ENCODE measurements at regions of chr11 and their contacts with region 1.

Region 1: DNA sequence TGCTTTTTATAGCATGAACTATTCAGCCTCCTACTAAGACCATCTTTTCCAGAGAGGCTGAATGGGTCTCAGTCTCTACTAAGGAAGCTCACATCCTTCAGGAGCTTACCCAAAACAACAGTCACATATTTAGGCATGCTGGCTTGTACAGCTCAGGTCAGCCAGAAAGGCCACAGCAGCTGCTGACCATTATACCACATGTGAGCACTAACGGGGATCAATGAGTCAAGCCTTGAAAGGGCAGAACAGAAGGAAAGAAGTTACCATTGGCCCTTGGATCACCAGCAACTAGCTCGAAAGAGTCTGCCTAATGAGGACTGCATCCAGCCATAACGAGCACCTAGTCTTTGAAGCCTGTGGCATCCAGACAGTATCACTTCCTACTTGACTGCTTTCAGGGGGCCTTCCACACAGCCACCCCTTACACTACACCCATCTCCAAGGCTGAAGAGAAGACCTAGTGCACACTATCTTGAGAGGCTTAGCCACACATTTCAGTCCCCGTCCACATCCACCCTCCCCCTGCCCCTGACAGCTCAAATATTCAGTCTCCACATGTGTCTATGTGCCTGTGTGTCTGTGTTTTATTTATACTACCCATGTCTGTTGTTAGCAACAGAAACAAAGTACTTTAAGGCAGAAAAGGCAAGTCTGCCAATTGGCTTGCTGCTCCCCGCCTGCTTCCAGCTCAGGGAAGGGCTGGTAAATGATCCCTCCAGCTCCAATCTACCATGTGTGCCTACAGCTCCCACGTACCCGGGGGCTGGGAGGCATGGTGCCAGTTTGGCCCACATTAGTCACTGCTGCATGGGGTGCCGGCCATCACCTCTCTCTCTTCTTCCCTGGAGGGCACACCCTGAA is 95.5 kb downstream of the RPL27A start:
- DNase-seq: peak; percentile 62 to 84 (median 78)
- H3K4me3 ChIP-seq: no peak overlapping the region
- H3K27ac ChIP-seq: peak overlapping the region in 1 of 2 donors; percentile 78
- H3K4me1 ChIP-seq: peaks cover 42% of the 10 kb centered on the region
- H3K27me3 ChIP-seq: no peaks in the 10 kb centered on the region
- CTCF ChIP-seq: no peak
- EP300 ChIP-seq: no peak
- POLR2A ChIP-seq: no peak

Region 2: DNA sequence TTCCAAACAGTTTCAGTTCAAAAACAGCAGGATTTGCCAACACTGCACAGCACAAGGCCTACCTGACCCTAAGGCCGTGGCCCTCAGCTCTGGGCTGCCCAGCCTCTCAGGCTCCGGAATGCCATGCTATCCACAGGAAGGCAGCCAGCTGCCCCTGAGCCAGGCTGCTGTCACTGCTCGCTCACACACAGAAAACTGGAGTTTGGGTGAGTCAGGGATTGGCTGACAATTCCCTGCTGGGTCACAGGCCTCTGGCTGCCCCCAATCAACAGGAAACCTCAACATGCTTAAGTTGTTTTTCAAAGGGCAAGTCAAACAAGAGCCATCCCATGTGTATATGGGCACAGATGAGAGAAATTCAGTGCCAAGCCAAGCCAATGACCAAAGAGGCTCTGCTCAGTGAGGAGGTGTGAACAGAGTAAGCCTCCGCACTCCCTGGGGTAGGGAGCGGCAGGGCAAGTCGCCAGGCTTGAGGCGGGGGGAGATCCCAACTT is 45.3 kb before region 1 on chr11:
- intact Hi-C with region 1: loop called in 2 of 4 experiments (anchors 5 kb)
- DNase-seq: peak; percentile 52 to 69 (median 63)
- H3K4me3 ChIP-seq: no peak overlapping the region
- H3K27ac ChIP-seq: peak overlapping the region in 1 of 2 donors; percentile 52
- H3K4me1 ChIP-seq: peaks cover 43% of the 10 kb centered on the region
- H3K27me3 ChIP-seq: no peaks in the 10 kb centered on the region
- CTCF ChIP-seq: no peak
- EP300 ChIP-seq: no peak
- POLR2A ChIP-seq: no peak

Region 3: DNA sequence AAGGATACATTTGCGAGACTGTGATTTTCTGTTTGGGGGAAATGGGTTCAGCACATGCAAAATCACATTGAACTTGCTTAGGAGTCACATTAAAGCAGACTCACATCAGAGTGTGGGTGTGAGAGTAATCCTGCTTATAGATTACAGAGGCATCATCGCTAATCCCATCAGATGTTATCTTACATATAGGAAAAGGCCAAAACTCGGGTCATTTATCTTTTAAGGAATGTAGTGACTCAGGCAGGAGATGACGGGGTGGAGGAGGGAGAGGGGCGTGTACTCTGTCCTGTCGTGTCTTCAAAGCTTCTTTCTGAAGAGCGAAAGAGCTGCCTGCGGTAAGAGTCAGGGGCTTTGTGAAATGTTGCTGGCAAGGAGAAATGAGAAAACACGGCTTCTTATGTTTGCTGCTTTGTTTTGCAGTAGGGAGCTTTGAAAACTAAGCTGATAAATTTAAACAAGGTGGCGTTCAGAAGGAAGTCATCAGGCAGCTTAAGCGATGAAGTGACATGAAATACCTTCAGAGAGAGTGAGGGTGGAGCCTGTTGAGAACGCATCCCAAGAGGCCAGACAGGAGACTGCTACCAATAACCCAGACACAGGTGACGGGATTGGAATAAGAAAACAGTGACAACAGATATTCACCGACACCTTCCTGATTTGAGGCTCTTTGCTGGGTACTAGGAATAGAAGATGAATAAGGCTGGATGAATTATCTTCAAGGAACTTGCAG is 156.8 kb after region 1 on chr11:
- intact Hi-C with region 1: no loop called
- DNase-seq: no peak
- H3K4me3 ChIP-seq: no peak overlapping the region
- H3K27ac ChIP-seq: no peak overlapping the region
- H3K4me1 ChIP-seq: no peaks in the 10 kb centered on the region
- H3K27me3 ChIP-seq: no peaks in the 10 kb centered on the region
- CTCF ChIP-seq: no peak
- EP300 ChIP-seq: no peak
- POLR2A ChIP-seq: no peak